Dorsolateral prefrontal cortex (tissue), 120 donors: ENCODE measurements at regions of chr4 and their contacts with region 1.

Region 1: GRCh38 chr4:71456841-71457240 is 118.0 kb downstream of the SLC4A4 start:
- DNase-seq: peak in 3 of 10 donors; percentile 3 to 40 (median 19)
- H3K4me3 ChIP-seq: no peak overlapping the region
- H3K27ac ChIP-seq: peak overlapping the region in 34 of 59 donors; percentile 1 to 72 (median 29)
- H3K27me3 ChIP-seq: no peaks in the 10 kb centered on the region
- CTCF ChIP-seq: no peak

Region 2: GRCh38 chr4:70721747-70722146 is 735.1 kb before region 1 on chr4 and contains the start of gene RUFY3:
- intact Hi-C with region 1: no loop called
- DNase-seq: peak in 9 of 10 donors; percentile 66 to 90 (median 79)
- H3K4me3 ChIP-seq: peak within 1 kb of the TSS; percentile 31 to 92 (median 75)
- H3K27ac ChIP-seq: peak within 1 kb of the TSS; percentile 75 to 98 (median 92)
- H3K27me3 ChIP-seq: no peaks in the 10 kb centered on the region
- CTCF ChIP-seq: peak in 21 of 56 donors; percentile 3 to 53 (median 29)
- total RNA-seq, gene RUFY3: 148 to 276 (median 235) TPM

Region 3: GRCh38 chr4:70778888-70779422 is 677.9 kb before region 1 on chr4:
- intact Hi-C with region 1: no loop called
- DNase-seq: no peak
- H3K4me3 ChIP-seq: no peak overlapping the region
- H3K27ac ChIP-seq: peak overlapping the region in 19 of 59 donors; percentile 1 to 57 (median 35)
- H3K27me3 ChIP-seq: no peaks in the 10 kb centered on the region
- CTCF ChIP-seq: no peak

Region 4: DNA sequence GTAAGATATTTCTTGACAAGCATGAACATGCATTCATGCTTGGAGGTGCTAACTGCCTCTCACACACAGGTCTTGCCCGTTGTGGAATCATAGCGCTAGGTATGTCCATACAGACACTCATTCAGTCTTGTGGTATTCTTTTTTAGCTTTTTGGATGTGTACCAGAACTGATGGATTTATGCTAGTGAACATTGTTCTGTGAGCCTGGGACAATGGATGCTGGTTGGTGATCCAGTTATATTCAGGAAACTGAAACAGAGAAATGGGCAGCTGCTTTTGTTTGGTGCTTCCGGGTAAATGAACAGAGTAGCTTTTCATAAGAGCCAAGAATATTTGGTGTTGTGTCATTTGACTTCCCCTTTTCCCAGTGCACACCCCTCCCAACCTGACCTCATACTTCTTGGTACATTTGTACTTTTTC is 196.9 kb before region 1 on chr4:
- intact Hi-C with region 1: loop called in 1 of 2 experiments (anchors 10 kb)
- DNase-seq: peak in 1 of 10 donors; percentile 29
- H3K4me3 ChIP-seq: peak overlapping the region in 24 of 59 donors; percentile 2 to 46 (median 20)
- H3K27ac ChIP-seq: peak overlapping the region in 55 of 59 donors; percentile 13 to 89 (median 70)
- H3K27me3 ChIP-seq: no peaks in the 10 kb centered on the region
- CTCF ChIP-seq: peak in 1 of 56 donors; percentile 11

Region 5: DNA sequence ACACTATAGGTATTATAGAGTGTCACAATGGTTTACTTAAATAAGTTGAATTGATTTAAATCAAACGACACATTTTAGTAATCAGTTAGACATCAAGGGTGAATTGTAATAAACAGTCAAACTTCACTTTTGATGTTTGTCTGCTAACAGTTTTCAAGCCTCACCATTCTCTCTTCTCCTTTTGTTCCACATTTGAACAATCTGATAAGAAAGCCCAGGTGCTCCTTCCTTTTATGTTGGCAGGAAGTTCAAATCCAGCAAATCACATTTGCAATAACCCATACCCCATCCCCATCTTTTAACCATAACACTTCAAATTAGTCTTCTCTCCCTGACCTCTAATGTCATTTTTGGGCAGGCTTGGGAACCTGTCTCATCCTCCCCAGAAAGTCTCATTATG is 390.5 kb after region 1 on chr4:
- intact Hi-C with region 1: no loop called
- DNase-seq: no peak
- H3K4me3 ChIP-seq: no peak overlapping the region
- H3K27ac ChIP-seq: no peak overlapping the region
- H3K27me3 ChIP-seq: peaks cover 0 to 2% (median 0%) of the 10 kb centered on the region in 45 donors
- CTCF ChIP-seq: no peak